ENCODE measurements at regions of chr22 and their contacts with region 1.

Region 1: DNA sequence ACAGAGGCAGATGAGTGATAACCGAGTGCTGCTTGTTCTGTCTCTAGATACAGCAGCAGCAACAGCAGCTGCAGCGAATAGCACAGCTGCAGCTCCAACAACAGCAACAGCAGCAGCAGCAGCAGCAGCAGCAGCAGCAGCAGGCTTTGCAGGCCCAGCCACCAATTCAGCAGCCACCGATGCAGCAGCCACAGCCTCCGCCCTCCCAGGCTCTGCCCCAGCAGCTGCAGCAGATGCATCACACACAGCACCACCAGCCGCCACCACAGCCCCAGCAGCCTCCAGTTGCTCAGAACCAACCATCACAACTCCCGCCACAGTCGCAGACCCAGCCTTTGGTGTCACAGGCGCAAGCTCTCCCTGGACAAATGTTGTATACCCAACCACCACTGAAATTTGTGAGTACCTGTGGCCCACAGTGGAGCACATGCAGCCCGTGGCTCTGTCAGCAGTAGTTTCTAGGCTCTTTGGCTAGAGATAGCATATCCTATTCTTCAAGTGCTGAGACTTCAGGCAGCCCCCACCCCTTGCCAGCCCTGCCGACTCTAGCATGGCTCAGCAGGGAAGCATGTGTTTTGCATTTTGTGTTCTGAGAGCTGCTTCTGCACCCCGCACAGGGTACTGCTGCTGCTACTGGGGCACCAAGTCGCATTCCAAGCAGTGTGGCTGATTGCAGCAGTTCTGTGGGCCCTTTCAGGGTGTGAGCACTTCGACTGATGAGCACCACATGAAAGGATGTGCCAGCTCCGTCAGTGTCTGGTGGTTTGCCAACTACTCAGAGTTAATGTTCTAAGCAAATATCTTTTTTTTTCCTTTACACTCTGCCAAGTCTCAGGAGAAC is 59.2 kb downstream of the MED15 start:
- DNase-seq: peak; percentile 74
- H3K4me3 Mint-ChIP-seq: peak overlapping the region; percentile 66
- H3K27ac Mint-ChIP-seq: peak overlapping the region; percentile 97
- H3K4me1 Mint-ChIP-seq: peaks cover 93% of the 10 kb centered on the region
- H3K27me3 Mint-ChIP-seq: no peaks in the 10 kb centered on the region

Region 2: DNA sequence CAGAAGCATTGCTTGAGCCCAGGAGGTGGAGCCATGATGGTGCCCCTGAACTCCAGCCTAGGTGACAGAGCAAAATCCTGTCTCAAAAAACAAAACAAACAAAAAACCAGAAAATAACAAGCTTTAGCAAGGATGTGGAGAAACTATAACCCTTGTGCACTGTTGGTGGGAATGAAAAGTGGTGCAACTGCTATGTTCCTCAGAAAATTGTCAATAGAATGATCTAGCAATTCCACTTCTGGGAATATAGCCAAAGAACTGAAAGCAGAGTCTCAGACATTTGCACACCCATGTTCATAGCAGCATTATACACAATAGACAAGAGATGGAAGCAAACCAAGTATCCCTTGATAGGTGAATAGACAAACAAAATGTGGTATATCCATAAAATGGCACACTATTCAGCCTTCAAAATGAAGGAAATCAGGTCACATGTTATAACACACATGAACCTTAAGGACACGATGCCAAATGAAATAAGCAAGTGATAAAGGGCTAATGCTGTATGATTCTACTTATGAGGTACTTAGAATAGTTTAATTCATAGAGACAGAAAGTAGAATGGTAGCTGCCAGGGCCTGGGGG is 86.9 kb before region 1 on chr22:
- CTCF ChIA-PET with region 1: no interaction called
- DNase-seq: no peak
- H3K4me3 Mint-ChIP-seq: no peak overlapping the region
- H3K27ac Mint-ChIP-seq: no peak overlapping the region
- H3K4me1 Mint-ChIP-seq: peaks cover 25% of the 10 kb centered on the region
- H3K27me3 Mint-ChIP-seq: no peaks in the 10 kb centered on the region

Region 3: DNA sequence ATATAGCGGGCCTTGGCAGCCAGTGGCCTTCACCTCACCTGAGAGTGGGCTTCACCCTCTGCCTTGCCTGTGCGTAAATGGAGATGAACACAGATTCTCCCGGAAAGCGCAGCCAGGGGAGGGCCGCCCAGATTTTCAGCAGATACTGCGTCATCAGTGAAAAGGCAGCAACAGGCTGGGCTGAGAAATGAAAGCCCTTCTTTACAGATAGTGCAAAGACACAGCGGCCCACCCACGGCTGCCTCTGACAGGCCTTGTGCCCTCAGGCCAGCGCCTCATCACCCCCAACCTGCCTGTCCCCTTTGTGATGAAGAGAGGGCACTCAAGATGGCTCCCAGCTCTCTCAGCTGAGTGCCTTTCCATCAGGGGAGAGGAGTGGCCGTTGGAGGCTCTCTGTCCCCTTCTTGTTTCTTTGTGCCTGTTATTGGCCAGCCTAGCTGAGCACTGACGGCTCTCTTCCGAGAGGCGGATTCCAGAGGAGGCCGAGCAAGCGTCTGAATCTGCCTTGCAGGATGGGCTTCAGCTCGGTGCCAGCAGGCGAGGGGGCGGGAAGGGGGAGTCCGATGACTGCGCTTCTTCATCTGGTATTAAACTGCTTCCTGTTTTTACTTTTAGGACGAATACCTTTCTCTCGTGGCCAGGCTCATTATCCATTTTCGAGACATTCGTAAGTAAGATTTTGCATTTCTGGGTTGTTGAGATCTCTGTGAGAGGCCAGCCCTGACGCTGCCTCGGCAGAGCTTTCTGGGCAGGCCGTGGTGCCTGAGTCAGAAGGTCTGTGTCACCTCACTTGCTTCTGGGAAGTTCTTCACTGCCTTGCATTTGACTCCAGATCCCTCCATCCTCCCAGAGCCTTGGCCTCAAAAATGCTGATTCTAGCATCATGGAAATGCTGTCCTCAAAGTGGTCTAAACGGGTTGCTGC is 15.6 kb before region 1 on chr22:
- CTCF ChIA-PET with region 1: interaction called, 45 read pairs
- DNase-seq: peak; percentile 59
- H3K4me3 Mint-ChIP-seq: peak overlapping the region; percentile 76
- H3K27ac Mint-ChIP-seq: peak overlapping the region; percentile 100
- H3K4me1 Mint-ChIP-seq: peaks cover 95% of the 10 kb centered on the region
- H3K27me3 Mint-ChIP-seq: no peaks in the 10 kb centered on the region

Region 4: DNA sequence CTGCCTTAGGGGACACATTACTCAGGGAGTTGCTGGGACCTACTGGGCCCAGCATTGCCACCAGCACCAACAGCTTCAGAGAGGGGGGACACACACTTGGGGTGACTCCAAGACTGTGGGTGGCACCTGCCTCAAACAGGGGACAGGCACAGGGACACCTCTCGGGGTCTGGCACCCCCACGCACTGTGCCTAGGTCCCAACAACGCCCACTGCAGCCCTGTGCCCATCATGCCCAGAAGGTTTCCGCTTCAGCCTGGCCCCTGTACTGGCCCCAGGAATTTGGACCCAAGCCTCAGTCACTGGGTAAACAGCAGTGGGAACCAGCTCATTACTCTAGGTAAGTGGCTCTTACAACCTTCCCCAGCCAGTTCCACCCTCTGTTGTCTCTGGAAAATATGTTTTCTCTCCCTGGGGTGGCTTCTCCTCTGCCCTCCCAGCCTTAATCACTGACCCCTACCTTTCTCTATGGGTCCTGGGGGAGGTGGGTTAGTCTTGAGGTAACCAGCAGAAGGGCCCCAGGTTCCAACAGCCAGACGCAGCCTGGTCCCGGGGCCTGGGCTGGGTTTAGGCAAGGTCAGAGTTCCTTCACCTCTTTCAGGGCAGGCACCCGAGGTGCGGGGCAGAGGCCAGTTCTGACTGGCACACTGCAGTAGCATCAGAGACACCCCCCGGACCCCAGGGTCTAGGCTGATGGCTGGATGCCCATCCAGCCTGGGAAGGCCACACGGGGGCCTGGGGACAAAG is 64.4 kb after region 1 on chr22:
- CTCF ChIA-PET with region 1: no interaction called
- DNase-seq: no peak
- H3K4me3 Mint-ChIP-seq: no peak overlapping the region
- H3K27ac Mint-ChIP-seq: no peak overlapping the region
- H3K4me1 Mint-ChIP-seq: no peaks in the 10 kb centered on the region
- H3K27me3 Mint-ChIP-seq: peaks cover 68% of the 10 kb centered on the region

Measured in activated naive CD4-positive, alpha-beta T cell treated with anti-CD3 and anti-CD28 coated beads, Interleukin-2, amount 10 ng/mL, durations not matched to agents 7 days and 5 days (primary cell).